Activated T-helper 2 cell treated with anti-CD3 and anti-CD28 coated beads, Interferon-gamma antibody, Interleukin-2, Interleukin-4, amounts not matched to agents 10 μg/mL and 5 μg/mL and 100 μg/mL, durations not matched to agents 14 hours and 24 hours and 36 hours (primary cell): ENCODE measurements at regions of chr5 and their contacts with region 1.

Region 1: DNA sequence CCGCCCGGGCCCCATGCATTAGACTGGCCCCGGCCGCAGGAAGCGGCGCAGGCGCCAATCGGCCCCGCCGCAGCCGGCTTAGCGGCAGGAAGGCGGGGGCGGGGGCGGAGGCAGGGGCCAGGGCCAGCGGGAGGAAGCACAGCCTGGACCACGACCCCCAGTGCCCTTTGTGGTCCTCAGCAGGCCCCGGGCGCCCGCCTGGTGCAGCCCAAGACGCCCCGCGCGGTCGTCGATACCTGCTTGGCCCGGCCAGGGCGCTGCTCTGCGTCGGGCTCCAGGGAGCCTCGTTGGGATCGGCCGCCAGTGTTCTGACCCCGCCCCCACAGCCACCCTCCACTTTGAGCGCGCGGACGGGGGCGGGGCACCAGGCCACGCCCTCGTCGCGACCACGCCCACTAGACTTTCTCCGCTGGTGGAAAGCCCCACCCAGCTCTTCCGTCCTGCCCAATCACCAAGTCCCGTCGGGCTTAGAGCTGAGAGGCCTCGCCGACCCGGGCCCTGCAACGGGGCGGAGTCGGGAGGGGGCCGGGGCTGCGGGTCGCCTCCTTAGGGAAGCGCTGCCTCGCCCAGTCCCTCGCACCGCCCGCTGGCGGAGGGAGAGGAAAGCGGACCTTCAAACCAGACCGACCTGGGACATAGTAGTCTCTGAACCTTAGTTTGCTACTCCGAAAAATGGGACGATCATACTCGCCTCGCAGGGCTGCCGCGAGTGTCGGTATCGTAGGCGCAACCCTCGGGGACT is at the start of gene PDLIM7:
- DNase-seq: peak; percentile 93
- H3K4me3 Mint-ChIP-seq: peak within 1 kb of the TSS; percentile 86
- H3K27ac Mint-ChIP-seq: peak within 1 kb of the TSS; percentile 62
- H3K4me1 Mint-ChIP-seq: peaks cover 23% of the 10 kb centered on the region
- H3K27me3 Mint-ChIP-seq: peaks cover 18% of the 10 kb centered on the region
- total RNA-seq, gene PDLIM7: 85.4 and 86.9 TPM in 2 replicates

Region 2: GRCh38 chr5:177098470-177099141 is 398.9 kb before region 1 on chr5:
- intact Hi-C with region 1: no loop called
- DNase-seq: no peak
- H3K4me3 Mint-ChIP-seq: no peak overlapping the region
- H3K27ac Mint-ChIP-seq: no peak overlapping the region
- H3K4me1 Mint-ChIP-seq: no peaks in the 10 kb centered on the region
- H3K27me3 Mint-ChIP-seq: peaks cover 2% of the 10 kb centered on the region

Region 3: GRCh38 chr5:177113566-177114424 is 383.7 kb before region 1 on chr5:
- intact Hi-C with region 1: loop called (anchors 5 kb)
- DNase-seq: peak; percentile 72
- H3K4me3 Mint-ChIP-seq: no peak overlapping the region
- H3K27ac Mint-ChIP-seq: peak overlapping the region; percentile 34
- H3K4me1 Mint-ChIP-seq: peaks cover 14% of the 10 kb centered on the region
- H3K27me3 Mint-ChIP-seq: peaks cover 5% of the 10 kb centered on the region

Region 4: GRCh38 chr5:177390363-177391300 is 106.8 kb before region 1 on chr5:
- intact Hi-C with region 1: loop called (anchors 1 kb)
- DNase-seq: peak; percentile 82
- H3K4me3 Mint-ChIP-seq: no peak overlapping the region
- H3K27ac Mint-ChIP-seq: peak overlapping the region; percentile 63
- H3K4me1 Mint-ChIP-seq: peaks cover 26% of the 10 kb centered on the region
- H3K27me3 Mint-ChIP-seq: peaks cover 8% of the 10 kb centered on the region

Region 5: GRCh38 chr5:177454397-177455035 is 42.9 kb before region 1 on chr5:
- intact Hi-C with region 1: loop called (anchors 1 kb)
- DNase-seq: peak; percentile 89
- H3K4me3 Mint-ChIP-seq: peak overlapping the region; percentile 84
- H3K27ac Mint-ChIP-seq: no peak overlapping the region
- H3K4me1 Mint-ChIP-seq: peaks cover 17% of the 10 kb centered on the region
- H3K27me3 Mint-ChIP-seq: peaks cover 8% of the 10 kb centered on the region

Region 6: DNA sequence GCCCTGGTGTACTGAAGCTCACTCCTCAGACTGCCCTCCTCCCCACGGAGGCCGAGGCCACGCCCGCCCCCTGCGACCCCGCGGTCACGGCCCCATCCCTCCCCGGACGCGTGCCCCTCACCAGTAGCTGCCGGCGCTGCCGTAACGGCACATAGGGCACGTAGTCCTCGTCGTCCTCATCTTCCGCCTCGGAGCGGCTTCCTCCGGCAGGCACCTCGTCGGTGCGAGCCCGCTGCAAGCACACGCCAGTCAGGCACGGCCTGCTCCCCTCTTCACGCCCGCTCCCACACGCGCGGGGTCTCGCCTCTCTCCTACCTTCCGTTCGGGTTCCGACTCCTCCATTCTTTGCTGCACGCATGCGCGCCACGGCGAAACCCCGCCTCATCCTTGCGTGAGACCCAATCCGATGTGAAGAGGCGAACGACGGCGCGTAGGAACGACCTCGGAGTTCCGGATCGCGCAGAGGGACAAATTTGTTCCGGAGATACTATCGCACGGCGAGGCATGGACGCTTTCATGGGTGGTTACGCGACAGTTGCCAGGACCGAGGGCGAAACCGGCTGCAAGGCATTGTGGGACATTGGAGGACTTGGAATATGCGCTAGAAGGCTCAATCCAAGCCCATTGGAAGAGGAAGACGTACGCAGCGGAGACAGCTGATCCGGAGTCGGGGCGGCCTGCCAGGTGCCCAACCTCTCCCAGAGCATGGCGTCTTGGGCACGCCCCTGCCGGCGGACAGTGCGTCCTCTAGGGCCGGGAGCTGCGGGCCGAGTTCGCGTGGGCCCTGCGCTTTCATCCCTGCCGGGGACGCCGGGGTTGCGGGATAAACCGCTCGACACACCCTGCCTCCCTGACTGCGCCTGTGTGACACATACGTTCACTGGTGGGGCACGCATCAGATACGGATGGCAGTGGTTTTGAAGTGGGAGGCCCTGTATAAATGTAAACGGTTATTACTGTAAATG is 19.4 kb after region 1 on chr5 and contains the start of gene DDX41:
- intact Hi-C with region 1: loop called (anchors 1 kb)
- DNase-seq: peak; percentile 97
- H3K4me3 Mint-ChIP-seq: peak within 1 kb of the TSS; percentile 87
- H3K27ac Mint-ChIP-seq: peak within 1 kb of the TSS; percentile 80
- H3K4me1 Mint-ChIP-seq: peaks cover 27% of the 10 kb centered on the region
- H3K27me3 Mint-ChIP-seq: no peaks in the 10 kb centered on the region
- total RNA-seq, gene DDX41: 138 and 144 TPM in 2 replicates